Caco-2 (cell line): ENCODE measurements at regions of chr11 and their contacts with region 1.

Region 1: GRCh38 chr11:73876424-73877300 is at the starts of genes COA4 and PAAF1:
- DNase-seq: peak; percentile 100
- H3K4me3 ChIP-seq: peak within 1 kb of the TSS; percentile 62
- H3K4me3 Mint-ChIP-seq: peak within 1 kb of the TSS; percentile 91
- H3K27ac Mint-ChIP-seq: peak within 1 kb of the TSS; percentile 95
- H3K4me1 ChIP-seq: peaks cover 23% of the 10 kb centered on the region
- H3K4me1 Mint-ChIP-seq: peaks cover 6% of the 10 kb centered on the region
- H3K27me3 ChIP-seq: no peaks in the 10 kb centered on the region
- H3K27me3 Mint-ChIP-seq: no peaks in the 10 kb centered on the region
- CTCF ChIP-seq: no peak
- total RNA-seq, gene COA4: 127 and 137 TPM in 2 replicates
- total RNA-seq, gene PAAF1: 51.6 and 53.4 TPM in 2 replicates

Region 2: DNA sequence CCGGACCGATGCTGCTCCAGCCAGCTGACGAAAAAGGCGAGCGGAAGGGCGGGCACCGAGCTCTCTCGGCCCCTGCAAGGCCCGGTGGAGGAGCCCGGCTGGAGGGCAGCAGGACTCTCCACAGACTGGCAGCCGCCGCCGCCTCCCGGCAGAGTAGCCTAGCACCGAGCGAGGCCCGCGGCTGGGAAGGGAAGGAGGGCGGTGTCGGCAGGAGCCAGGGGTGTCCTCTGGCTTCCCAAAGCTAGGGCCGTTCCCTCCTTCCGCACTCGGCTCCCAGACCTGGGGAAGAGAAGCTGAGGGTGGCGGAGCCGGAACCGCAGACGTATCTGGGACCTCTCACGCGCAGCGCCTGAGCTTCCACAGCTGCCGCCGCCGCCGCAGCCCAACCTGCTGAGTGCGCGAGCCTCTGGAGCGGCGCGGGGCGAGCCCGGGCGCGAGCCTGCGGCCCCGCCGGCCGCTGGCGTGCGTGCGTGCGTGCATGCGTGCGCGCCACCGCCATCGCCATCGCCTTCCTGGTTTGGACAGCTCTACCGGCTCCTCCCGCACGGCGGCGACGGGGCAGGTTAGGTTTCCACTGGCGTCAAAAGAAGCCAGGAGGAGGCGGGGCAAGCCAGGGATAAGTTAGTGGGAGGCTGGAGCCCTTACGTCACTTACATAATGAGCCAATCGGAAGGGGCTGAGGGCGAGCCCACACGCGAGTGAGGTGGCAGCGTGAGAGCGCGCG is 115.8 kb before region 1 on chr11 and contains the start of gene RAB6A:
- CTCF ChIA-PET with region 1: interaction called, 3 read pairs
- POLR2A ChIA-PET with region 1: interaction called, 3 read pairs
- intact Hi-C with region 1: loop called (anchors 1 kb)
- DNase-seq: peak; percentile 100
- H3K4me3 ChIP-seq: peak within 1 kb of the TSS; percentile 92
- H3K4me3 Mint-ChIP-seq: peak within 1 kb of the TSS; percentile 91
- H3K27ac Mint-ChIP-seq: peak within 1 kb of the TSS; percentile 82
- H3K4me1 ChIP-seq: peaks cover 28% of the 10 kb centered on the region
- H3K4me1 Mint-ChIP-seq: peaks cover 21% of the 10 kb centered on the region
- H3K27me3 ChIP-seq: no peaks in the 10 kb centered on the region
- H3K27me3 Mint-ChIP-seq: no peaks in the 10 kb centered on the region
- CTCF ChIP-seq: peak; percentile 51 to 63
- total RNA-seq, gene RAB6A: 210 and 227 TPM in 2 replicates

Region 3: DNA sequence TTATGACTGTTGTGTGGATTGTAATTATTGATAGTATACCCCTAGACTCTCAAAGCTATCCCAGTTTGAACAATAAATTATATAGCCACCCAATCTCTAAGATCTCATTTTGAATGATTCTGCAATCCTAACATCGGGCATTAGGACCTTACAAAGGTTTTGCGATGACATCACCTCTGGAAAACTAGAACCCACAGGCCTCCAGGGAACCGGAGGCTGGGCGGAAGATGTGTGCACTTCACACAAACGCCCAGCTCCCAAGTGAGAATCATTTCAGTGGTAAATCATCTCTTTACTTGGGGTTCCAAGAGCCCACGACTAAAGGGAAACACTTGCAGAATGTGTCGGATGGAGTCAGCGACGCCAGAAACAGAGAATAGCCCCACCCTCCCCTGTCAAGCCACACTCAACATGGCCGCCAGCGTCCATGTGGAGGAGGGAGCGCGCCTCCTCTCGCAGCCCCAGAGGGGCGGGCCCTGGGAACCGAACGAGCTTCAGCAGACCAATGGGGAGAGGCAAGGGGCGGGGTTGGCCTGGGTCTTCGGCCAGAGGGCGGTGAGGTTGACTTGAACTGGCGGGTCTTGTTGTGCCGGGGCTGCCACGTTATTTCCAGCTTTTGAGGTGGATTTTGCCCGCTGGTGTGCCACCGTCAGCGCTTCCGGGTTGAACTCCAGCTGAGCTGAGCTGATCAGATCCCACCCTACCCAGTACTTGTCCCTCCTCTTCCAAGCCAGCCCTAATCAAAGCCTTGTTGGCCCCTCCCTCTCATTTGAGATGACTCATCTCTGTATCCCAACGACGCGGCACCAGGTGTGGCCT is 97.4 kb before region 1 on chr11:
- CTCF ChIA-PET with region 1: no interaction called
- POLR2A ChIA-PET with region 1: interaction called, 8 read pairs
- intact Hi-C with region 1: loop called (anchors 1 kb)
- DNase-seq: peak; percentile 100
- H3K4me3 ChIP-seq: peak overlapping the region; percentile 72
- H3K4me3 Mint-ChIP-seq: peak overlapping the region; percentile 99
- H3K27ac Mint-ChIP-seq: peak overlapping the region; percentile 99
- H3K4me1 ChIP-seq: peaks cover 21% of the 10 kb centered on the region
- H3K4me1 Mint-ChIP-seq: peaks cover 16% of the 10 kb centered on the region
- H3K27me3 ChIP-seq: no peaks in the 10 kb centered on the region
- H3K27me3 Mint-ChIP-seq: no peaks in the 10 kb centered on the region
- CTCF ChIP-seq: no peak

Region 4: DNA sequence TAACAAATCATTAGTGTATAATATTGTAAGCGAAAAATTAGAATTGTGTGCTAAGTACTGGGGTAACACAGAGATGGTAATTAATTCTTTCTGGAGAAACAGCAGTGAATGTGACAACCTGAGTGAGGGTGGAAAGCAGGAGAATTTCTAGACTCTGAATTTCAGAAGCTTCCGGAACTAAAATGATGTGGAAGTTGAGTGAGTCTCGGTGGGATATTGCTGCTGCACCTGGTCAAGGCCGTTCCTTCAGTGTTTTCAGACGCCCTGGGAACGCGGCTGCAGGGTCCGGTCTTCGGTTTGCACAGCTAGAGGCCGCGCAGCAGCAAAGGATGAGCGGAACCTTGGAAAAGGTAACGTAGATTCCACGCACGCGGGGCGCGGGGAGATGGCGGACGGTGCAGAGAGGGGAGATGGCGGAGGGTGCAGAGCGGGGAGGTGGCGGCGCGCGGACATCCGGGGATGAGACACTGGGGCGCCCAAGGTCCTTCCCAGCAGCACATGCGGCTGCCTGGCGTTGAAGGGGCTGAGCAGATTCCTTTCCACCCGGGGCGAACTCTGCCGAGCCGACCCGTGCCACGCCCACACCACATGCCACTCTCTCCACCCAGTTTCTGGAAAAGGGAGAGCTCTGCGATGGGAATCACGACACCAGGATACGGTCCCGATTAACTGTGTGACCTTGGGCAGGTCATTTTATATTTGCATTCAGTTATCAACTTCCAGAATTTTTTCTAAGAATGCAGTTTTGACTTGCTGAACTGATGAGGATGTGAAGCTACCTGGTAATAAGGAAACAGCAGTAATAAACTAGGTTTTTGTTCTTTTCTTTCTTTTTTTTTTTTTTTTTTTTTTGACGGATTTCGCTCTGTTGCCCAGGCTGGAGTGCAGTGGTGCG is 88.8 kb before region 1 on chr11 and contains the start of gene MRPL48:
- CTCF ChIA-PET with region 1: no interaction called
- POLR2A ChIA-PET with region 1: interaction called, 12 read pairs
- intact Hi-C with region 1: loop called (anchors 1 kb)
- DNase-seq: peak; percentile 99
- H3K4me3 ChIP-seq: peak within 1 kb of the TSS; percentile 66
- H3K4me3 Mint-ChIP-seq: peak within 1 kb of the TSS; percentile 86
- H3K27ac Mint-ChIP-seq: peak within 1 kb of the TSS; percentile 95
- H3K4me1 ChIP-seq: peaks cover 27% of the 10 kb centered on the region
- H3K4me1 Mint-ChIP-seq: peaks cover 30% of the 10 kb centered on the region
- H3K27me3 ChIP-seq: no peaks in the 10 kb centered on the region
- H3K27me3 Mint-ChIP-seq: no peaks in the 10 kb centered on the region
- CTCF ChIP-seq: no peak
- total RNA-seq, gene MRPL48: 111 and 113 TPM in 2 replicates

Region 5: DNA sequence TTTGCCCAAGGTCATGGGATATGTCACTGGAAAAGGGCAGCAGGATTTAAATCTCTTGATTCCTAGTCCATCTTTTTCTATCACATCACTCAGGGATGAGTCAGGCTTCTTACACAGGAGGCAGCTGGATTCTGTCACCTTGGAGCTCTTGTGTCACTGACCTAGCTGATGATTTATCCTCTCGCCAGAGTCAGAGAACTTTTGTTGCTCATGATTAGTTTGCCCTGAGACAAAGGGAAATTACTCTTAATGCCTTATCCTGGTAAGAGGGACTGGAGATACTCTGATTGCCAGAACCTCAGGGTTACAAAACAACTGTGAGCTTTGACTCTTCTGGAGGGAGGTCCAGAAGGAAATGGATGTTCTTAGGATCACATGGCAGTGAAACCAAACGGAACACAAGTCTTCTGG is 10.1 kb before region 1 on chr11:
- CTCF ChIA-PET with region 1: no interaction called
- POLR2A ChIA-PET with region 1: no interaction called
- intact Hi-C with region 1: loop called (anchors 1 kb)
- DNase-seq: no peak
- H3K4me3 ChIP-seq: no peak overlapping the region
- H3K4me3 Mint-ChIP-seq: no peak overlapping the region
- H3K27ac Mint-ChIP-seq: no peak overlapping the region
- H3K4me1 ChIP-seq: peaks cover 22% of the 10 kb centered on the region
- H3K4me1 Mint-ChIP-seq: peaks cover 12% of the 10 kb centered on the region
- H3K27me3 ChIP-seq: no peaks in the 10 kb centered on the region
- H3K27me3 Mint-ChIP-seq: no peaks in the 10 kb centered on the region
- CTCF ChIP-seq: no peak

Region 6: DNA sequence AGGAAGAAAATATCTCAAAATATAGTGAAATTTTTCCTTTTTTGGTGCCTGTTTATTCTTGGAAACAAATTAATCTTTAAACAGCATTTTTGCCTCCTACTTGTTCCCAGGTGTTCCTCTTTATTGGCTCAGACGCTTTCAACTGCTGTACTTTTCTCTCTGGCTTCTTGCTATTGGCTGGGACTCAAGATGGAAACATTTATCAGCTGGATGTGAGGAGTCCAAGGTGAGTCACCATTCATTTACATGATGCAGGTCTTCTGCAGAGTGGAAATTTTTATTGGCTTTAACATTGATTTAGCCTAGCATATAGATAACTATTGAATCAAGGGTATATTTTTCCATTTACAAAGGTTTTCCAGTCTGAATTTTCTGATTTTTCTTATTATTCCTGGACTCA is 39.8 kb after region 1 on chr11:
- CTCF ChIA-PET with region 1: no interaction called
- POLR2A ChIA-PET with region 1: no interaction called
- intact Hi-C with region 1: loop called (anchors 1 kb)
- DNase-seq: no peak
- H3K4me3 ChIP-seq: no peak overlapping the region
- H3K4me3 Mint-ChIP-seq: no peak overlapping the region
- H3K27ac Mint-ChIP-seq: no peak overlapping the region
- H3K4me1 ChIP-seq: no peaks in the 10 kb centered on the region
- H3K4me1 Mint-ChIP-seq: peaks cover 6% of the 10 kb centered on the region
- H3K27me3 ChIP-seq: no peaks in the 10 kb centered on the region
- H3K27me3 Mint-ChIP-seq: no peaks in the 10 kb centered on the region
- CTCF ChIP-seq: no peak